ENCODE measurements at regions of chr16 and their contacts with region 1.

Region 1: DNA sequence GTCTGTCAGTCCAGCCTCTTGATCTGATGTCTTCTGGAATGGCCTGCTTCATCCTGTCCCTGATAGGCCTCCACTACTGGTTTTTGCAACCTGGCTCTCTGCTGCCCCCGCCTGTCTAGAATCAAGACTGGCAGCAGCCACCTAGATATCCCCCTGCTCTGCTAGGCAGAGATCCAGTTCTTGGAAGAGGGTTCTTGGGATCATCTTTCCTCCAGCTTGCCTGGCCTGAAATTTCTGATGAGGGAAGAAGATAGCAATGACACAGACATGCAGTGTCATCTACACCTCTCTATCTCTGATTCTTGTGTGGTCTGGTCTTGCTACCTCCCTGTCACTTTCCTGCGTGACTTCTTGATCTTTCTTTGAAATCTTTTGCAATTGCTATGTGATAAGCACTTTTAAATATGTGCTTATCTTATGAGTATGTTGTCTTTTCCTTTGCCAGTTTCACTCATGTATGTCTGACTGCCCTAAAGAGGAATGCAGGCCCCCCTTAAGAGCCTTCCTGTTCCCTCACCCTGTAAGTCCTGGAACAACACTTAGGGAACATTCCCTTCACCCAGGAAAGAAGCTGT is 20.3 kb upstream of the NFATC3 start:
- DNase-seq: peak; percentile 85
- ATAC-seq: peak; percentile 73
- H3K4me3 Mint-ChIP-seq: no peak overlapping the region
- H3K27ac Mint-ChIP-seq: peak overlapping the region; percentile 79
- H3K4me1 Mint-ChIP-seq: peaks cover 59% of the 10 kb centered on the region
- H3K27me3 Mint-ChIP-seq: no peaks in the 10 kb centered on the region
- CTCF ChIP-seq: peak; percentile 90

Region 2: GRCh38 chr16:68074850-68075555 is 10.1 kb after region 1 on chr16:
- CTCF ChIA-PET with region 1: interaction called, 38 read pairs
- POLR2A ChIA-PET with region 1: interaction called, 10 read pairs
- intact Hi-C with region 1: no loop called
- DNase-seq: peak; percentile 95
- ATAC-seq: peak; percentile 60
- H3K4me3 Mint-ChIP-seq: peak overlapping the region; percentile 32
- H3K27ac Mint-ChIP-seq: peak overlapping the region; percentile 95
- H3K4me1 Mint-ChIP-seq: peaks cover 80% of the 10 kb centered on the region
- H3K27me3 Mint-ChIP-seq: no peaks in the 10 kb centered on the region
- CTCF ChIP-seq: no peak

Region 3: GRCh38 chr16:68236137-68236825 is 171.4 kb after region 1 on chr16:
- CTCF ChIA-PET with region 1: no interaction called
- POLR2A ChIA-PET with region 1: no interaction called
- intact Hi-C with region 1: no loop called
- DNase-seq: peak; percentile 57
- ATAC-seq: no peak
- H3K4me3 Mint-ChIP-seq: peak overlapping the region; percentile 87
- H3K27ac Mint-ChIP-seq: peak overlapping the region; percentile 94
- H3K4me1 Mint-ChIP-seq: peaks cover 36% of the 10 kb centered on the region
- H3K27me3 Mint-ChIP-seq: no peaks in the 10 kb centered on the region
- CTCF ChIP-seq: no peak

Region 4: DNA sequence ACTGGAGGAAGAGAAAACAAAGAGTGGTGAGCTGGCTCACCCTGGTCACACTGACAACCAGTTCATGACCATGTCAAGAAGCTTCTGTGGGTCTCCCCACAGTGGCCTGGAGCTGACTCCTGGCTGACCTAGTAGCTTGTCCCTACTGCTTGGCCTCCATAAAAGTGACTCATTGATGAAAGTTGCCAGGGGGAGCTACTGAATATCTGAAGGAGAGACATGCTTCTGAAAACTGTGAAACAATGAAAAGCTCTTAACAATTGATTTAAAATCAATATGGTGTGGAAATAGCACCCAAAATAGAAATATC is 361.4 kb after region 1 on chr16:
- CTCF ChIA-PET with region 1: no interaction called
- POLR2A ChIA-PET with region 1: no interaction called
- intact Hi-C with region 1: no loop called
- DNase-seq: no peak
- ATAC-seq: no peak
- H3K4me3 Mint-ChIP-seq: no peak overlapping the region
- H3K27ac Mint-ChIP-seq: no peak overlapping the region
- H3K4me1 Mint-ChIP-seq: peaks cover 4% of the 10 kb centered on the region
- H3K27me3 Mint-ChIP-seq: no peaks in the 10 kb centered on the region
- CTCF ChIP-seq: no peak